GM18951 (cell line): ENCODE measurements at regions of chr5 and their contacts with region 1.

Region 1: GRCh38 chr5:150640311-150641005 is at the start of gene SYNPO:
- POLR2A ChIP-seq: no peak

Region 2: GRCh38 chr5:149938791-149939358 is 701.6 kb before region 1 on chr5:
- in situ Hi-C with region 1: no loop called
- POLR2A ChIP-seq: no peak

Region 3: GRCh38 chr5:150567021-150567717 is 73.3 kb before region 1 on chr5:
- in situ Hi-C with region 1: loop called (anchors 5 kb)
- POLR2A ChIP-seq: no peak

Region 4: DNA sequence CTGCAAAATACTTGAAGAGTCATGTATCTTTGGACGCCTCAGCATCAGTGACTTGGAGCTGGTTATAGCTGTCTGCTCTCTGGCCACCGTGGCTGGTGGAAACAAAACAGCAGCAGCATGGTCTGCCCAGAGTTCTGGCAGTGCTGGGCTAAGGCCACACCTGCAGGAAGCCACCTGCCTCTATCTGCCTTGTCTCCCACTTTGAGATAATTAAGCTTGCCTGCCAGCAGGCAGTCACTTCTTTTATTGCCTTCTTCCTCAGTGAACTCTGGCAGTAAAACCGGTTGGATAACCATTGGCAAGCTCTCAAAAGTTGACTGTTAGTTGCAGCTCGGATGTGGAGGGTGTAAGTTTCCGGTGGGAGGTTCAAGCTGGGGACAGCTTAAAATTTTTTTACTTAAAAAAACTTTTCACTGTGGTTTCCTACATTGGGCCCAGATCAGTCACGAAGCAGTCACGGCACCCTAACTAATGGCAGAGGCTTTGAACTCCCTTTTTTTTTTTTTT is 143.0 kb after region 1 on chr5:
- in situ Hi-C with region 1: no loop called
- POLR2A ChIP-seq: no peak